OCI-LY7 (cell line): ENCODE measurements at regions of chr7 and their contacts with region 1.

Region 1: DNA sequence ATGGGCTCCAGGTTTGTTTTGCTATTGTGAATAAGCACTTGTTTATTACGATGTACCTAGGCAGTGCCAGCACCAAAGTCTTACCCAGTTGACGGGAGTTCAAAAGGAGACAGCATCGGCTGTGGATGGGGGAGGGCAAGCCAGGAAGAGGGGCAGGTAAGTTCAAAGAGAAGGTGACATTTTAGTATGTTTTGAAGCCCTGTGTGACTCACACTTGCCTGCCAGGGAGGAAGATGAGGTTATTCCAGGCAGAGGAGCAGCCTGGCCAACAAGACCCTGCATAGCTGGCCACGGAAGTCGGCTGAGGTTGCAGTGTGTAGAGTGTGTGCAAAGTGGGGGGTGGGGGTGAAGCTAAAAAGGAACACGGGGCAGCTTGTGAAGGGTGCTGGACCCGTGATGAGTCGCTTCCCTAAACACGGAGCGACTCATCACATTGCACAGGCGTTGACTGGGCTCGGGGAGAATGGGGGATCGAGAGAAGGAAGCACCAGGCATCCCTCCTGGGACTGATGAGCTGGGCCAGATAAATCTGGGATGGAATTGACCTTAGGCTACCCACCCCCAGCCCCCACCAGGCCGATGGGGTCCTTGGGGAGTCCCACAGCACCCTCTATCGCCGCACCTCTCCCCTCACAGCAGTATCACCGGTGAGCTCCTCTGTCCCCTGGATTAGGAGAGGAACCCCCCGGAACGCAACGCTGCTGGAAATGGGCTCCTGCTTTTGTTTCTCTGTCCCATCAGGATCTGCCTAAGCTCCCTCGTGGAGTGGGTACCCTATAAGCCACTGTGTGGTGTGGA is 97.9 kb upstream of the IKZF1 start:
- DNase-seq: no peak
- H3K4me3 ChIP-seq: no peak overlapping the region
- H3K27ac ChIP-seq: no peak overlapping the region
- H3K4me1 ChIP-seq: peaks cover 34% of the 10 kb centered on the region
- CTCF ChIP-seq: no peak

Region 2: GRCh38 chr7:50142425-50143017 is 64.1 kb before region 1 on chr7:
- CTCF ChIA-PET with region 1: interaction called, 3 read pairs
- POLR2A ChIA-PET with region 1: interaction called, 12 read pairs
- intact Hi-C with region 1: loop called (anchors 1 kb)
- DNase-seq: peak; percentile 80
- H3K4me3 ChIP-seq: no peak overlapping the region
- H3K27ac ChIP-seq: peak overlapping the region; percentile 99
- H3K4me1 ChIP-seq: peaks cover 70% of the 10 kb centered on the region
- CTCF ChIP-seq: peak; percentile 96

Region 3: GRCh38 chr7:50246551-50246950 is 39.9 kb after region 1 on chr7:
- CTCF ChIA-PET with region 1: no interaction called
- POLR2A ChIA-PET with region 1: no interaction called
- intact Hi-C with region 1: no loop called
- DNase-seq: peak; percentile 44
- H3K4me3 ChIP-seq: no peak overlapping the region
- H3K27ac ChIP-seq: no peak overlapping the region
- H3K4me1 ChIP-seq: no peaks in the 10 kb centered on the region
- CTCF ChIP-seq: no peak

Region 4: DNA sequence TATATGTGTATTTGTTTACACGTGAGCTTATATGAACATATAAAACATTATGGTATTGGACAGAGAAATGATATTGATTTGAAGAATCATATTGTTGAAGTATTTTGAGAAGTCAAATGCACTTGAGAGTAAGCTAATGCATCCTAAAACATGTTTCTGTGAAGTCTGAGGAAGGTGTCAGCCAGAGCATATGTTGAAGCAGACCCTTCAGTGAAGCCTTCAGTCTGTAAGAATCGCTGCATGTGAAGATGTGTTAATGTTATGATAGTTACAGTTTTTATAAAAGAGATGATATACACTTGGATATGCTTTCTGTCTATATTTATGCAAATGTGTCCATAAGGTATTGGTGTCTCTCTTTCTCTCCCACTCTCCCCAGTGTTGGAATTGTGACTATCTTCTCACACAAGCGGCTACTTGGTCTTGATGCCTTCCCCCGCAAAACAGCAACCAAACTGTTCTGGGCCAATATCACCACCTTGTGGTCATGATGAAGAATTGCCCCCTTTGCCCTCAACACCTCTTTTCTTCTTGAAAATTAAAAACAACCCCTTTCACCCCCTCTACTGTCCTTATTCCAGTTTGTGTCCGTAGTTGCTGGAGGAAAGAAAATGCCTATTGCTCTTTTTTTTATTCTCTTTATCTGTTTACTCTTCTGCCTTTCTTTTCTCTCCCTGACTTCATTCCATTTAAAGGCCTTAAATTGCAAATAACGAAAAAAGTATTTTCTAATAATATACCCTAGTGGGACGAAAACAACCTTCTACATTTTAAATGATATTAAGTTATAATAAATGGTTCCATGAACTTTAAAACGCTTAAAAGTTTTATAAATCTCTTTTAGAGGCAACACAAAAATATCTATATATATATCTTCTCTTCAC is 162.7 kb after region 1 on chr7:
- CTCF ChIA-PET with region 1: interaction called, 3 read pairs
- POLR2A ChIA-PET with region 1: interaction called, 6 read pairs
- intact Hi-C with region 1: loop called (anchors 1 kb)
- DNase-seq: peak; percentile 83
- H3K4me3 ChIP-seq: no peak overlapping the region
- H3K27ac ChIP-seq: peak overlapping the region; percentile 30
- H3K4me1 ChIP-seq: peaks cover 17% of the 10 kb centered on the region
- CTCF ChIP-seq: peak; percentile 100

Region 5: DNA sequence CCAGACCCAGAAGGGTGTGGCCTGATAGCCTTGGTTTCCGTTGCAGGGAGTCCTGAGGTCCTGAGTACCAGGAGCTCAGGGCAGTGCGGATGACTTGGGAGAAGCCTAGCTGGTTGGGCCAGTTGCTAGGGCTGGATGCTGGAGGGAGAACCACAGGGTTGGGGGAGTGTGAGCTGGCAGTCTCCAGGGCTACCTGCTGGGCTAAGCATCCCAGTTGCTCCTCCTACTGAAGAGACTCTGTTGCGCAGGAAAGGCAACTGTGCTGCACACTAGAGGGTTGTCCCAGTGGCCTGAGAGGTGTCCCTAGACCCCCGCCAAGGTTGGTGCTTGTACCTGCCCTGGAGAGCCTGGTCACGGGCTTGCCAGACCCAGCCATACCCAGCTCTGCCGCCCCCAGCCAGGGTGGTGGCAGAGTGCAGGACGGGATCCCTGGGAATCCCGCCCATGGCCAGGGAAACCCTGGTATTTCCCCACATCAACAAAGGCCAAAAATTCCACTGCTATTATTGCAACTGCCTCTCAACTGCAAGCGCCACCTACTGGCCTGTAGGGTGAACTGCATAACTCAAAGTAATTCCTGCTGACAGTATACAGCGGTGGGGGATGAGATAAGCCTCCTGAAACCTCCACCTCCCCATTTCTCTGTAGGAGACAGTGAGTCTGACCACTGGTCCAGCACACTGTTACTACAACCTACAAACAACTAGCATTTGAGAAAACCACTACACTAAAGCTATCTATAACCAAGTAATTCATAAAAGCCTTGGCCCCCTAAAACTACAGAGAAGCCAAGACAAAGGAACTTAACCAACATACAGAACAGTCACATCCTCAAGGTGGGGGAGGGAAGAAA is 426.1 kb after region 1 on chr7:
- CTCF ChIA-PET with region 1: no interaction called
- POLR2A ChIA-PET with region 1: no interaction called
- intact Hi-C with region 1: loop called (anchors 2 kb)
- DNase-seq: peak; percentile 55
- H3K4me3 ChIP-seq: no peak overlapping the region
- H3K27ac ChIP-seq: no peak overlapping the region
- H3K4me1 ChIP-seq: no peaks in the 10 kb centered on the region
- CTCF ChIP-seq: peak; percentile 93

Region 6: DNA sequence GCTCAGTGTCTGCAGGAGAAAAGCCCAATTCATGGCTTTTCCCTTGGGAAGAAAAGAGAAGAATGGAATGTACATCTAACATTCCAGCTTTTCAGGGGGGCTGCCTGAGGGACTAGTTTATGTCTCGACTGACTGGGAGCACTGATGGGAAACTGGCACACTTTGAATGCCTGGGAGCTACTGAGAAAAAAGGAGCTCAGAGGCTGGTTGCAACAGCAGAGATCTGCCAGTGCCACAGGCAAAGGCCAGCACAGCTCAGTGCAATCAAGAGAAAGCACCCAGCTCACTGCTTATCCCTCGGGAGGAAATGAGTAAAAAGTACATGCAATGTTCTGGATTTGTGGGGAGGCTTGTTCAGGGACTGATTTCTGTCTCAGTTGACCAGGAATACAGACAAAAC is 883.8 kb after region 1 on chr7:
- CTCF ChIA-PET with region 1: no interaction called
- POLR2A ChIA-PET with region 1: no interaction called
- intact Hi-C with region 1: no loop called
- DNase-seq: no peak
- H3K4me3 ChIP-seq: no peak overlapping the region
- H3K27ac ChIP-seq: no peak overlapping the region
- H3K4me1 ChIP-seq: no peaks in the 10 kb centered on the region
- CTCF ChIP-seq: no peak